ENCODE measurements at regions of chr17 and their contacts with region 1.

Region 1: GRCh38 chr17:36647636-36648035 is 46.3 kb downstream of the MRM1 start:
- DNase-seq: peak in 1 of 2 experiments; percentile 61
- H3K4me3 ChIP-seq: no peak overlapping the region
- H3K27ac ChIP-seq: no peak overlapping the region
- H3K4me1 ChIP-seq: peaks cover 2 to 9% (median 5%) of the 10 kb centered on the region in 4 experiments; a peak in 6 of 7 replicates
- H3K27me3 ChIP-seq: peaks cover 7 to 21% (median 17%) of the 10 kb centered on the region in 4 experiments
- CTCF ChIP-seq: peak; percentile 56 to 75 (median 72)
- EP300 ChIP-seq: no peak
- POLR2A ChIP-seq: no peak
- RAD21 ChIP-seq: peak; percentile 40 to 56; a peak in 3 of 4 replicates

Region 2: DNA sequence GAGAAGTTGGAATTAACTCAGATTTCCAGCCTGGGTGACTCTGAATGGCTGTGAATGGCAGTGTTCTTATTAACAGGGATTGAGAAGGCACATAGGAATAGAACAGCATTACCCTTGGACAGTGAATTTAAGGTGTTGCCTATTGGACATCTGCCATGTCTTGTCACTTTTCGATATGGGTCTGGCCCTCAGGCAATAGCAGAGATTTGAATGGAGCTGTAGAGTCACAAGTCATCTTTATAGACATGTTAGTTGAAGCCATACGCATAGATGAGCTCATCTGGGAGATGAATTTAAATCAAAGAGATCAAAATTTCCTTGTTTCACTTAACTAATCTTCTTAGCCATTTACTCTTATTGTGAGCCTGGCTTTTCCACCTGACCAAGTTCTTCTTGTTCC is 70.8 kb before region 1 on chr17:
- CTCF ChIA-PET with region 1: no interaction called
- POLR2A ChIA-PET with region 1: no interaction called
- DNase-seq: no peak
- H3K4me3 ChIP-seq: no peak overlapping the region
- H3K27ac ChIP-seq: no peak overlapping the region
- H3K4me1 ChIP-seq: no peaks in the 10 kb centered on the region
- H3K27me3 ChIP-seq: no peaks in the 10 kb centered on the region
- CTCF ChIP-seq: no peak
- EP300 ChIP-seq: no peak
- POLR2A ChIP-seq: no peak
- RAD21 ChIP-seq: no peak

Region 3: DNA sequence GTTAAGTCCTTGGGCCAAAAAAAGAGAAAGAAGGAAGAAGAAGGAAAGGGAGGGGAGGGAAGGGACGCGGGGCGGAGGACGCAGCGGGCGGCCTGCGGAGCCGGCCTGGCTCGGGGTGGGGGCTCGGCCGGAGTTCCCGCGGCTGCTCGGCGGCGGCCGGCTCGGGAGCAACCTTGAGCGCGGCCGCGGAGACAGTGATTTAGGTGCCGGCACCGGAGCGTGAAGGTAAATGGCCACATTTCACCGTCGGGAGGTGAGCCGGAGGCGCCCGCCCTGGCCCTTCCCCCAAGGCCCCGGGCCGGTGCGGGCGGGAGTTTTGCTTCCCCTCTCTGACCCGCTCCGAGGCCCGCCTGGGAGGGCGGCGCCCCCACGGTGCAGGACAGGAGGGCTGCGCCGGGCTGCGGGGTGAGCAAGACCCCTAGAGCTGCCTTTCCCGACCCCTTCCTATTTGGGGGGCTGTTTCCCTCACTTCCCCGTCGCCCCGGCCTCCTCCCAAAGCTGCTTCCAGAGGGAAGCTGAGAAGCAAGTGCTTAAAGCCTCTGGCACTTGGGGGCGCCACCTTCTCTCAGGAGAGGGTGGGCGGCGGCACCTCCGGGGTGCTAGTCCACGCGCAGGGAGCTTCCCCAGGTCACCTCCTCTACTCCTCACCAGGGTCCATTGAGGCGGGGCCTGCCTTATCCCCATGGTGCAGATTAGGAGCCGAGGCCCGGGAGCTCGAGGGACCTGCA is 10.3 kb after region 1 on chr17:
- CTCF ChIA-PET with region 1: interaction called, 64 read pairs
- POLR2A ChIA-PET with region 1: interaction called, 3 read pairs
- DNase-seq: peak in 1 of 2 experiments; percentile 86
- H3K4me3 ChIP-seq: peak overlapping the region; percentile 44 to 81 (median 66)
- H3K27ac ChIP-seq: no peak overlapping the region
- H3K4me1 ChIP-seq: peaks cover 0 to 4% (median 3%) of the 10 kb centered on the region in 4 experiments; a peak in 3 of 7 replicates
- H3K27me3 ChIP-seq: peaks cover 0 to 10% (median 3%) of the 10 kb centered on the region in 4 experiments; a peak in 3 of 7 replicates
- CTCF ChIP-seq: peak; percentile 69 to 76 (median 74)
- EP300 ChIP-seq: 0 out of 3 replicates have a peak, but pooled peaks of 1 of the 2 experiments have one; percentile 17
- POLR2A ChIP-seq: no peak
- RAD21 ChIP-seq: peak; percentile 69 to 78

Region 4: DNA sequence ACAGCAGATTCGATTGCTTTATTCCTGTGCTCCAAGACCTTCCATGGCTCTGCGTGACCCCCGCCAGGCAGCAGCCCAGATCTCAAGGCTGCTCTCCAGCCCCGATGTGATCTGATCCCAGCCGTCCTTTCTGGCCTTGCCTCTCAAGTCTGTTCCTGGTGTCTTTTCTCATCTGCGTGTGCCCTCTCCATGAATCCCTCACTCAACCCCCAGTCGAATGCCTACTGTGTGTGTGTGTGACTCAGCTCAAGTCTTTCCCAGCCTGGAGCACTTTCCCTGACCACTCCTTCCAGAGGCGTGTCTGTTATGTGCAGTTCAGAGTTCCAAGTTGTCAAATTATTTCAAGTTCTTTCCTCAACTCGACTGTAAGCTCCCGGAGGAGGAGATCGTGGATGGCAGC is 17.8 kb after region 1 on chr17:
- CTCF ChIA-PET with region 1: interaction called, 64 read pairs
- POLR2A ChIA-PET with region 1: interaction called, 4 read pairs
- DNase-seq: no peak
- H3K4me3 ChIP-seq: no peak overlapping the region
- H3K27ac ChIP-seq: no peak overlapping the region
- H3K4me1 ChIP-seq: no peaks in the 10 kb centered on the region; a peak in 2 of 7 replicates
- H3K27me3 ChIP-seq: no peaks in the 10 kb centered on the region
- CTCF ChIP-seq: no peak
- EP300 ChIP-seq: no peak
- POLR2A ChIP-seq: no peak
- RAD21 ChIP-seq: no peak